Left ventricle myocardium superior (tissue), 1 donor: ENCODE measurements at regions of chr7 and their contacts with region 1.

Region 1: DNA sequence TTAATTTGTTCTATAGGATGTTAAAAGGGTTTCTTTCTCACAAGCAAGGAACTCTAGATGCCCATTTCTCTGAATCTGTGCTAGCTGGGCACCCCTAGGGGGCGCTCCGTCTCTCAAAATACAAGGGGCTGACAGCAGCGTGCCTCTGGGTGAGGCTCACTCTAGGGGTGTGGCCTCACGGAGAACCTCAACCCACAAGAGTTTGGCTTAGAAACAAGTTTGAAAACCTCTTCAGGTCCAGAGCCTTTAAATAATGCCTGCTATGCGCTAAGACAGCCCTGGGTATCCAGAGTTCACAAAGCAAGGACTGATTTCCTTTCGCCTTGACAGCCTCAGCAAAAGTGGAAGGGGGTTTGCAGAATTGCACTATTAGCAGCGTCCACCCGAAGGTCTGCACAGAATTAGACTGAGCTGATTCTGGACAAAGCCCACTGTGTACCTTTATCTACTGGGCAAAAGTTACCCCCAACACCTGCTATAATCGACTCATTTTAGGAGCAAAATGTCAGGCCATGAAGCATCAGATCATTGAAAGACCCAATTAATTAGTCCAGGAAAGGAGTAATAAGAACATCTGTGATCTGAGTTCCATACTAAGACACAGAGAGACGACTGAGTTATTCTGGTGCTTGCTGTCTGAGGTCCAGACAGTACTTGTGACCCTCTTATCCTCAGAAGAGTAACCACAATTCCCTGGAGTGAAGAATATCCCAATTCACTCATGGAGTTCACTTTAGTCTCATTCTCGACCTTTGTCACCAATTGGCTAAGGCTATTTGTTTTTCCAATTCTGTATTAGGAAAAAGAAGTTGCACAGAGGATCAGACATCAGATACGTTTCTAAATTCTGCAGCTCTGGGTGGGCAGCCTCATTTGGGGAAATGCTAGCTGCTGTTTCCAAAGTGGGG is 574 bp upstream of the CPED1 start:
- DNase-seq: peak; percentile 95
- ATAC-seq: peak; percentile 86

Region 2: GRCh38 chr7:121081327-121081936 is 93.5 kb after region 1 on chr7:
- intact Hi-C with region 1: loop called (anchors 5 kb)
- DNase-seq: no peak
- ATAC-seq: peak; percentile 59